B cell (primary cell): ENCODE measurements at regions of chr4 and their contacts with region 1.

Region 1: DNA sequence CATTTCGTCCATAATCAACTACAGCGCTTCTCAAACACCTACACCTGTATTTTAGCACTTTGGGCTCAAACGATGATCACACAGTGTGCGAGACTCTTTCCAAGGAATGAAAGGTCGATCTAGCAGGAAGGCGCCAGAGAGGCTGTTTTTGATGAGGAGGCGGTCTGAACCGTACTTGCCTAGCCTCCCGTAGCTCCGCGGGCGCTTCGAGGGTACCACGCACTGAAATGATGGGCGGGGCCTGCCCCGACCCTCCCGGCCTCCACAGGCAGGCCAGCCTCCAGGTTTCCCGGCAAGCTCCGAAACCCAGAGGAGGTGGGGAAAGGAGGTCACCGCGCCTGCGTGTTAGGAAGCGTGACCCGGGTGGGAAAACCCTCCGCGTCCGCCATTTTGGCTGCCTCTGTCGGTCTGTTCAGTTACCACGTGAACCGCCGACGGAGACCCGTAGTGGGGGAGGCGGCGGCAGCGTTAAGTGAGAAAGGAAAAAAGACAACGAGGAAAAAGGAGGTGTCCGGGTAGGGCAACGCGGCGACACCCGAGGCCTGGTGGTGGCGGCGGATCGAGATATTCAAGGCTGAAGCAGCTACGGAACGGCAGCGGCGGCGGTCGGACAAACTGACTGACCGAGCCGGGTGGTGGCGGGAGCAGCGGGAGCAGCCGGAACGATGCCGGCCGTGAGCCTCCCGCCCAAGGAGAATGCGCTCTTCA is at the start of gene NAA15:
- DNase-seq: peak; percentile 98
- ATAC-seq: peak; percentile 89
- H3K4me3 ChIP-seq: peak within 1 kb of the TSS; percentile 75 to 98 (median 94)
- H3K4me3 Mint-ChIP-seq: peak within 1 kb of the TSS; percentile 99
- H3K27ac ChIP-seq: peak within 1 kb of the TSS; percentile 91 to 96
- H3K27ac Mint-ChIP-seq: peak within 1 kb of the TSS; percentile 99
- H3K4me1 ChIP-seq: peaks cover 22 to 23% of the 10 kb centered on the region in 2 donors
- H3K4me1 Mint-ChIP-seq: peaks cover 45% of the 10 kb centered on the region
- H3K27me3 ChIP-seq: no peaks in the 10 kb centered on the region
- H3K27me3 Mint-ChIP-seq: no peaks in the 10 kb centered on the region
- CTCF ChIP-seq: no peak
- total RNA-seq, gene NAA15: 56.7 and 59.5 TPM in 2 replicates

Region 2: DNA sequence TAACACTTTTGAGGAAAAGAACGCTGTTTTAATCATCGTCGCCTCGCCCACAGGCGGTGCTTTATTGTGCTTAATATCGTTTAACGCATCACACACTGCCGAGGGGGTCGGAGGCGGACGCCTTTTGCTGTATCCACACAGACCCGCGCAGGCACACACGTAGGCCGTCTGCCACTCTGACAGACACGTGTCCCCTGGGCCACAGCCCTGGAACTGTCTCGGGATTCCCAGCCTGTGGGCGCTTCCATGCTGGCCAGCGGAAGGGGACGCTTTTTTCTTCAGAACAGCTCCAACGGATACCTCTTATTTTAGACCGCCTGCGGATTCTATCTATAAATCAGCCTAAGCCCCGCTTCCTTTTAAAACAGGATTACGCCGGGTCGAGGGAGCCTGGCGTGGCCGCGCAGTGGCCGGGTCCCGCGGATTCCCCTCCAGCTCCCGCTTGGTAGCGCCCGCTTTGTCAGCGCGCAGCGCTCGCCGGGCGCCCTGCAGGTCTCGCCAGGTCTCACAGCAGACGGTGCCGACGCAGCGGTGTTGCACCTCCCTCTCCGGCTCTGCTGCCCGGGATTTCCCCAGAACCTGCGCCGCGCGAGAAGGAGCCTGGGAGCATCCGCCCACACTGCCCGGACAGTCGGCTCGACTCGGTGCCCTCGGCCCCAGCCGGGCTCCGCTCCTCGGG is 285.9 kb before region 1 on chr4 and contains the start of gene NOCT:
- CTCF ChIA-PET with region 1: no interaction called
- POLR2A ChIA-PET with region 1: no interaction called
- intact Hi-C with region 1: loop called (anchors 2 kb)
- DNase-seq: peak; percentile 97
- ATAC-seq: peak; percentile 92
- H3K4me3 ChIP-seq: peak within 1 kb of the TSS; percentile 56 to 86 (median 78)
- H3K4me3 Mint-ChIP-seq: peak within 1 kb of the TSS; percentile 92
- H3K27ac ChIP-seq: peak within 1 kb of the TSS; percentile 88 to 98
- H3K27ac Mint-ChIP-seq: peak within 1 kb of the TSS; percentile 98
- H3K4me1 ChIP-seq: peaks cover 14 to 18% of the 10 kb centered on the region in 2 donors
- H3K4me1 Mint-ChIP-seq: peaks cover 28% of the 10 kb centered on the region
- H3K27me3 ChIP-seq: no peaks in the 10 kb centered on the region
- H3K27me3 Mint-ChIP-seq: no peaks in the 10 kb centered on the region
- CTCF ChIP-seq: no peak
- total RNA-seq, gene NOCT: 2.6 and 3.0 TPM in 2 replicates

Region 3: GRCh38 chr4:139279760-139280620 is 21.3 kb before region 1 on chr4 and contains the start of gene MGARP:
- CTCF ChIA-PET with region 1: interaction called, 27 read pairs
- POLR2A ChIA-PET with region 1: no interaction called
- intact Hi-C with region 1: loop called (anchors 2 kb)
- DNase-seq: peak; percentile 53
- ATAC-seq: peak; percentile 74
- H3K4me3 ChIP-seq: peak within 1 kb of the TSS; percentile 32 to 75 (median 56)
- H3K4me3 Mint-ChIP-seq: peak within 1 kb of the TSS; percentile 88
- H3K27ac ChIP-seq: no peak within 1 kb of the TSS
- H3K27ac Mint-ChIP-seq: no peak within 1 kb of the TSS
- H3K4me1 ChIP-seq: peaks cover 17 to 19% of the 10 kb centered on the region in 2 donors
- H3K4me1 Mint-ChIP-seq: peaks cover 18% of the 10 kb centered on the region
- H3K27me3 ChIP-seq: peaks cover 0 to 38% (median 32%) of the 10 kb centered on the region in 4 experiments
- H3K27me3 Mint-ChIP-seq: peaks cover 40% of the 10 kb centered on the region
- CTCF ChIP-seq: no peak
- total RNA-seq, gene MGARP: not detected in 2 replicates

Region 4: DNA sequence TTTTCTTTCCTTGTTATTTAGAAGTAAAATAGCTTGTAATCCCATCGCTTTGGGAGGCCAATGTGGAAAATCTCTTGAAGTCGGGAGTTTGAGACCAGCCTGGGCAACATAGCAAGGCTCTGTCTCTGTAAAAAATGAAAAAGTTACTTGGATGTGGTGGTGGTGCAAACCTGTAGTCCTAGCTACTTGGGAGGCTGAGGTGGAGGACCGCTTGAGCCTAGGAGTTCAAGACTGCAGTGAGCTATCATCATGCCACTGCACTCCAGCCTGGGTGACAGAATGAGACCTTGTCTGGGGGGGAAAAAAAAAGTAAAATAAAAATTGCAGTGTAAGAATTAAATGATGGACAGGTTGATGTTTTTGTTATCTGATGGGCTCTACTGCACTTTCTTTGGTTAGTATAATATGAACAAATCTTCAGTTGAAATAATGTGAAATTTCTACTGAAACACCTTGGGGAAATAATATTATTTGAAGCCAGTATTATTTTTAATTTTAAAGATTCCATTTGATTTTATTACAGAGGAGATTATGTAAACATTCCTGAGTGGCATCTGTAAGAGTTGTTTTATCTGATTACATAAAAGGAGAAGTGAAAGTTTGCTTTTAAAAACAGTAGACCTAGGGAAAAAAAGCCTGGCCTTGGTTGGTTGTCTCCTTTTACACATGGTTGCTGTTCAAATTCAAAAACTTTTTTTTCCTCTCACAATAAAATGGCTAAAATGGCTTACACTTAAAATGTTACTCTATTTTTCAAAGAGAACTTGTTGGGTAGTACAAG is 11.5 kb after region 1 on chr4:
- CTCF ChIA-PET with region 1: interaction called, 24 read pairs
- POLR2A ChIA-PET with region 1: interaction called, 8 read pairs
- intact Hi-C with region 1: loop called (anchors 1 kb)
- DNase-seq: peak; percentile 62
- ATAC-seq: peak; percentile 53
- H3K4me3 ChIP-seq: peak overlapping the region in 1 of 5 experiments; percentile 48
- H3K4me3 Mint-ChIP-seq: peak overlapping the region; percentile 87
- H3K27ac ChIP-seq: peak overlapping the region; percentile 43 to 80
- H3K27ac Mint-ChIP-seq: peak overlapping the region; percentile 93
- H3K4me1 ChIP-seq: peaks cover 44 to 59% of the 10 kb centered on the region in 2 donors
- H3K4me1 Mint-ChIP-seq: peaks cover 70% of the 10 kb centered on the region
- H3K27me3 ChIP-seq: no peaks in the 10 kb centered on the region
- H3K27me3 Mint-ChIP-seq: no peaks in the 10 kb centered on the region
- CTCF ChIP-seq: no peak

Region 5: DNA sequence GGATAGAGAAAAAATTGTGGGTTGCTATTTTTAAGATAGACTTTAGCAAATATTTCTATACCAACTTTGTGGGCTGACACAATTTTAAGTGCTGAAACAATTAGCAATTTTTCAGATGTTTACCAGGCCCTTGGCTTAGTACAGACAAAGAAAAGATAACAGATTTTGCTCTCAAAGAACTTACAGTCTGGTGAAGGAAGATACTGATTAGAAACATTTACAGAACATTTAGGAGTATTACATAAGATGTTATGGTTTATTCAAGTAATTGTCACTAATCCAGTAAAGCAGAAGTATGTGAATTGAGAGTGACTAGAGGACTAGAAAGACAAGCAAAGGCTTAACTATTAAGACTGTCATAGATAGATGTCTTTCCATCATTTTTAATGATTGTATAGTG is 36.3 kb after region 1 on chr4:
- CTCF ChIA-PET with region 1: interaction called, 6 read pairs
- POLR2A ChIA-PET with region 1: no interaction called
- intact Hi-C with region 1: loop called (anchors 5 kb)
- DNase-seq: no peak
- ATAC-seq: no peak
- H3K4me3 ChIP-seq: no peak overlapping the region
- H3K4me3 Mint-ChIP-seq: no peak overlapping the region
- H3K27ac ChIP-seq: peak overlapping the region in 1 of 2 donors; percentile 8
- H3K27ac Mint-ChIP-seq: no peak overlapping the region
- H3K4me1 ChIP-seq: peaks cover 5% of the 10 kb centered on the region in 2 donors
- H3K4me1 Mint-ChIP-seq: peaks cover 20% of the 10 kb centered on the region
- H3K27me3 ChIP-seq: no peaks in the 10 kb centered on the region
- H3K27me3 Mint-ChIP-seq: no peaks in the 10 kb centered on the region
- CTCF ChIP-seq: no peak

Region 6: DNA sequence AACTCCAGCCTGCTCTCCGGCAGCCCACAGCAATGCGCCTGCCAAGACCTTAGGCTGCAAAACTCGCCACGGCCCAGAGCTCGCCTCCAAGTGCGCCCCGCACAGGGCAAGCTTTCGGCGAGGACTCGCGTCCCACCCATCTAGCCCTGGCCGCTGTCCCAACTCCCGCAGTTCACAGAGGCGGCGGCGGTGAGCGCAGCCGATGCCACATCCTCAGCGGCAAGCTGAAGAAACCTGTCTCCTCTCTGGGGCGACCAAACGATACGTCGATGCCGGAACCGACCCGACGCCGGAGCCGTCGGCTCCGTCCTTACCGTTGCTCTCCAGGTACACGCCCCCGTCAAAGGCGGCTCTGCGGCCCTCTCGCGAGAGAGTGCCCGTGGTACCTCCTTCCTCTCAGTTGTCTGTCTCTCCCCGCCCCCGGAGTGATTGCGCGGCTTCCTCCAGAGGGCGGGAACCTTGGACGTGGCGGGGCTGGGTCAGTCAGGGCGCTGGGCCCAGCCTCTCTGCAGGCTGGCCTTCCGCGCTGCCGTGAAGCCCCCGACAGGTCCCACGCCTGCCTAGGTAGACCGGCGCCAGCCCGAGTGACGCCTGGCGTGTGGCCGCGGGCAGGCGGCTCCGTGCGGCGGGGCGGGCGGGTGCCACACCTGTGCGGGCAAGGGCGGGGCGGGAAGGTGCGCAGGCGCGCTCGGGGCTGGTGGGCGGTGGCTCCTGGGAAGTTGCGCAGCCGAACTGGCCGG is 152.3 kb after region 1 on chr4:
- CTCF ChIA-PET with region 1: no interaction called
- POLR2A ChIA-PET with region 1: interaction called, 4 read pairs
- intact Hi-C with region 1: loop called (anchors 1 kb)
- DNase-seq: peak; percentile 98
- ATAC-seq: peak; percentile 87
- H3K4me3 ChIP-seq: peak overlapping the region; percentile 64 to 99 (median 93)
- H3K4me3 Mint-ChIP-seq: peak overlapping the region; percentile 96
- H3K27ac ChIP-seq: peak overlapping the region; percentile 97 to 98
- H3K27ac Mint-ChIP-seq: peak overlapping the region; percentile 99
- H3K4me1 ChIP-seq: peaks cover 28 to 34% of the 10 kb centered on the region in 2 donors
- H3K4me1 Mint-ChIP-seq: peaks cover 51% of the 10 kb centered on the region
- H3K27me3 ChIP-seq: no peaks in the 10 kb centered on the region
- H3K27me3 Mint-ChIP-seq: no peaks in the 10 kb centered on the region
- CTCF ChIP-seq: peak; percentile 42

Region 7: DNA sequence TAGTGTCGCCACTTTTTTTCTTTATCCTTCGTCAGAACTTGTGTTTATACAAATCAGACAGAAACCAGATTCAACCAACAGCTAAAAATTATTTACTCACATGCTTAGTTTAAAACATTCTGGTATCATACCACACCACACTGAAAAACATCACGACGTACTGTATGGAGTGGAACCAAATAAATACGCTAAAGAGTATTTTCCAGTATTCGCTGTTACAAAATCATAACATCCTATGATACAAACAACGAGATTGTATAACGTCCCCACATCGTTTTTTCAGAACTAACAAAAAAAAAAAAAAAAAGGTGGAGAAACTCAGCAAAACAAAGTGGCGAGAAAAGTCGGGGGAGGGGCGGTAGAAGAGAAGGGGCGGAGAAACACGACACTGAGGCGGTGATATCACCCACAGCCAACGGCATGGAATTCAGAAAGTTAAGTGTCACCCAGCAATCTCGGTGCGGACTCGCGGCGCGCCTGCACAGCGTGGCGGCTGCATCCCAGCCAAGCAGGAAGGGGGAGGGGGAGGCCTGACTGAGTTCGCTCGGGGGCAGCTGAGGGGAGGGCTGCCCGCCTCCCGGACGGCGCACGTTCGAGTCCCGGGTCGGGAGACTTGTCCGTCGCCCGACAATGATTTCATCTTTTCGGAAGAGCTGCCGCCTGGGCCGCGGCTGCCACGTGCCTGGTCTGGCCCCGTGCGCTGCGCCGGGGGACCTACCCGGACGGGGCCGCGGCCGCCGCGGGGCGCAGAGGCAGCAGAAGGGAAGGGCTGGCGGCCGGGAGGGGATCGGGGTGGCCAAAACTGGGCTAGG is 253.8 kb after region 1 on chr4:
- CTCF ChIA-PET with region 1: no interaction called
- POLR2A ChIA-PET with region 1: interaction called, 4 read pairs
- intact Hi-C with region 1: loop called (anchors 2 kb)
- DNase-seq: peak; percentile 91
- ATAC-seq: peak; percentile 60
- H3K4me3 ChIP-seq: peak overlapping the region; percentile 73 to 96 (median 89)
- H3K4me3 Mint-ChIP-seq: peak overlapping the region; percentile 100
- H3K27ac ChIP-seq: peak overlapping the region; percentile 93 to 98
- H3K27ac Mint-ChIP-seq: peak overlapping the region; percentile 100
- H3K4me1 ChIP-seq: peaks cover 29 to 31% of the 10 kb centered on the region in 2 donors
- H3K4me1 Mint-ChIP-seq: peaks cover 63% of the 10 kb centered on the region
- H3K27me3 ChIP-seq: no peaks in the 10 kb centered on the region
- H3K27me3 Mint-ChIP-seq: no peaks in the 10 kb centered on the region
- CTCF ChIP-seq: no peak

Region 8: DNA sequence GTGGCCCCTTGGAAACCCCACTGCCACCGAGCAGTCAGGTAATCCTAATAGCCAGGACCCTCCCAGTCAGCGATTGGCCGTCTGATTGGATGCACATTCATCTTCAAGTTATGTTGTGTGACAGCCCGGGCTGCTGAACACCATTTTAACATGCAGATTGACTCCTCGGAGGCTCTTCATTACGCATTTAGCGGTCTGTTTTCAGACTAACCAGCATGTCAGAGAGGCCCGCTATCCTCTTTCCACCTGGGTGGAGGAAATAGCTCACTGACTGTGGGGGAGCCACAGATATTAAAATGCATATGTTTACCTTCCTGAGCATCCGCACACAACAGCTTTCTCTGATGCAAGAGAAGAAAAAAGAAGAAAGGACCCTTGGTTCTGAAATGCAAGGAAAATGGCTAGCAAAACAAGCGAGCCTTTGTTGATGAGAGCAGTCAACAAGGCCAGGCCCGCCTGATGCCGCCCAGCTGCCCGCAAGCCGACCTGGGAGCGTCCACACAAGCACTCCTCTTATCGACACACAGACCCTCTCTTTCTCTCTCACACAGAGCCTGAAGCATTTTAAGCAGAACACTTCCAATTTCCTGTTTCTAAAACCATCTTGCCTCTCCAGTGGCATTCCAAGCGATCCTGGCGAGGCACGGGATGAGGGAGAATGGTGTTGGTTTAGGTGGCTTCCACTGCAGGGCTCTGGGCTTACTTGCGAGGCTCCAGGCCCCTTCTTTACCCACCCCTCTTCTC is 482.6 kb after region 1 on chr4:
- CTCF ChIA-PET with region 1: no interaction called
- POLR2A ChIA-PET with region 1: no interaction called
- intact Hi-C with region 1: no loop called
- DNase-seq: no peak
- ATAC-seq: no peak
- H3K4me3 ChIP-seq: no peak overlapping the region
- H3K4me3 Mint-ChIP-seq: no peak overlapping the region
- H3K27ac ChIP-seq: no peak overlapping the region
- H3K27ac Mint-ChIP-seq: no peak overlapping the region
- H3K4me1 ChIP-seq: no peaks in the 10 kb centered on the region
- H3K4me1 Mint-ChIP-seq: peaks cover 5% of the 10 kb centered on the region
- H3K27me3 ChIP-seq: peaks cover 0 to 3% (median 0%) of the 10 kb centered on the region in 4 experiments
- H3K27me3 Mint-ChIP-seq: peaks cover 3% of the 10 kb centered on the region
- CTCF ChIP-seq: no peak